Activated CD4-positive, alpha-beta T cell treated with anti-CD3 and anti-CD28 coated beads for 36 hours (primary cell): ENCODE measurements at regions of chr5 and their contacts with region 1.

Region 1: DNA sequence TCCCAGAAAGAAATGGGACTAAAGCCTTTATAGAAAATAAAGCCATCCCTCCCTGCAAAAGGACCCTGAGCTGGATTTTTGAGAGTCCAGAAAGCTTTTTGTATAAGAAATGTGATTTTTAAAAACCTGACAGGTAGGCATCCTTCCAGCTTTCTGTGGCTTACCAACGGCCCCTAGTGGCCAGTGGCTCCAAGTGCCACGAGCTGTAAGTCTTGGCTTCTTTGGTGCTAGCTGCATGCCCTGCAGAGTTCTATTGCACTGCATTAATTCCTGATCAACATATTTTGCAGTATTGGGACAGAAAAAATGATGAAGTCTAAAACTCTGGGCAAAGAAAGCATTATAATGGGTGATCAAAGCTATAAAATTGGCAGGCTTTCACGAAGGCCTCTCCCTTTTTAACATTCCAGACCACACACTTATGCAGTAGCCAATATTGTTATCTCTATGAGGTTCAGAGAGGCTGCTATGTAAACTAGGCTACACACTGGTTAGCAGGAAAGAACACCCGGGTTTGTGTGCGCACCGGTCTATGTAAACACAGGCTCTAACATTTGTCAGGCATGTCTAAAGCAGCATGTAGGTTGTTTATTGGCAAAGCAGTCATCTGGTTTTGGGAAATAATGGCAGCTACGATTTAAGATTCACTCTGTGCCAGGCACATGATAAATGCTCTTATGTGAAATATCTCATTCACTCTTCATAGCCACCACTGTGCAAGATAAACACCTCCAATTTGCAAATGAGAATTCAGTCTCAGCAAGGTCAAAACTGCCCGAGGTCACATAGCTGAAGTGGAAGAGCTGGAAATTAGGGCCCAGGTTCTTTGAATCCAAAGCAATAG is 55.2 kb downstream of the NMUR2 start:
- DNase-seq: peak; percentile 61
- ATAC-seq: no peak
- H3K4me3 Mint-ChIP-seq: no peak overlapping the region
- H3K27ac Mint-ChIP-seq: no peak overlapping the region
- H3K4me1 Mint-ChIP-seq: no peaks in the 10 kb centered on the region
- H3K27me3 Mint-ChIP-seq: peaks cover 2% of the 10 kb centered on the region

Region 2: DNA sequence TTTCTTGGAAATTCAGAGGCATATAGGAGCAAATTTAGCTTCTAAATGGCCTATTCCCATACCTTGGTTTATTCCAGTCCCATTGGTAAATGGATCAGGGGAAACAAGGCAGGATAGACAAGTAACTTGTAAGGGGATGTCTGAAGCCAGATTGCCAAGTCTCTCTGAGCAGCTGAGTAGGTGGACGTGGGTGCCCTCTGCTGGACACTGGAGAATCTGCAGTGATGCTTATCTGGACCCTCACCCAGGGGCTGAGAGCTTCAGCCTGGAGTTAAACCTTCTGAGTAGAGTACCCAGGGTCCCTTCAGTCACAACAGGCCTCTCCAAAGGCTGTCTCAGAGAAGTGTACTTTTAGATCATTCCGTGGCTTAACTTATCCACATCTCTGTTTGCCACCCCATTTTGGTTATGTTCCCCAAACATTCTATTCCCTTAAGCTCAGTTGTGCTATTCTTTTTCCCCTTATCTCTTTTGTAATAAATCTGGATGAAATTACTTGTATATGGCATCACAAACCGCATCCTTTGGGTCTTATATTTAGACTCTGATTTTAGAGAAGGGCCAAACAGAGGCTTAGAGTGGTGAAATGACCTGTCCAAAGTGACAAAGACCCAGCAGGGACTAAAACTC is 206.9 kb before region 1 on chr5:
- CTCF ChIA-PET with region 1: interaction called, 7 read pairs
- POLR2A ChIA-PET with region 1: no interaction called
- intact Hi-C with region 1: loop called in 1 of 2 experiments (anchors 5 kb)
- DNase-seq: peak; percentile 78
- ATAC-seq: peak; percentile 81
- H3K4me3 Mint-ChIP-seq: no peak overlapping the region
- H3K27ac Mint-ChIP-seq: no peak overlapping the region
- H3K4me1 Mint-ChIP-seq: no peaks in the 10 kb centered on the region
- H3K27me3 Mint-ChIP-seq: no peaks in the 10 kb centered on the region

Region 3: GRCh38 chr5:152329207-152329606 is 20.7 kb before region 1 on chr5:
- CTCF ChIA-PET with region 1: no interaction called
- POLR2A ChIA-PET with region 1: no interaction called
- intact Hi-C with region 1: no loop called
- DNase-seq: no peak
- ATAC-seq: no peak
- H3K4me3 Mint-ChIP-seq: no peak overlapping the region
- H3K27ac Mint-ChIP-seq: no peak overlapping the region
- H3K4me1 Mint-ChIP-seq: no peaks in the 10 kb centered on the region
- H3K27me3 Mint-ChIP-seq: no peaks in the 10 kb centered on the region